ENCODE measurements at regions of chr4 and their contacts with region 1.

Region 1: DNA sequence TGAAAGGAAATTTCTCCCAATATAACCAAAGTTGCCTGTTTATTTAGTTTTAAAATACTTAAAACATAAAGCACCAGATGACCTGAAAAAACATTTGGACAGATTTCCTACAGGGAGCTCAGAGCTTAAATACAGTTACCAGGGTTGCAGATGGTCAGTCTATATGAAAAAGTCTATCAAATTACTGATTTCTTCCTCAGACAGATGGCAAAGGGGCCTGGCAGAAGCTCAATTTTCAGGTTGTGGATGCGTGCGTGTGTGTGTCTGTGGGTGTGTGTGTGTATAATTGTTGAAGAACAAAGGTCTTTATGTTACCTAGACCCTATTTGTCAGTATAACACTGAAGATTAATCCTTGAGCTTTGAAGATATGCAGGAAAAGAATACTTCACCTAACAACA is 169.4 kb downstream of the MAD2L1 start:
- DNase-seq: no peak
- H3K4me3 ChIP-seq: no peak overlapping the region
- H3K27ac ChIP-seq: no peak overlapping the region
- H3K4me1 ChIP-seq: peaks cover 0 to 31% (median 12%) of the 10 kb centered on the region in 4 donors
- H3K27me3 ChIP-seq: no peaks in the 10 kb centered on the region
- CTCF ChIP-seq: no peak
- EP300 ChIP-seq: no peak
- POLR2A ChIP-seq: no peak

Region 2: GRCh38 chr4:119666653-119667091 is 230.6 kb before region 1 on chr4:
- intact Hi-C with region 1: loop called (anchors 5 kb)
- DNase-seq: no peak
- H3K4me3 ChIP-seq: no peak overlapping the region
- H3K27ac ChIP-seq: peak overlapping the region; percentile 49 to 75 (median 70)
- H3K4me1 ChIP-seq: peaks cover 0 to 82% (median 61%) of the 10 kb centered on the region in 4 donors
- H3K27me3 ChIP-seq: no peaks in the 10 kb centered on the region
- CTCF ChIP-seq: no peak
- EP300 ChIP-seq: peak in 1 of 4 donors; percentile 39
- POLR2A ChIP-seq: no peak

Region 3: GRCh38 chr4:119683518-119683917 is 213.7 kb before region 1 on chr4:
- intact Hi-C with region 1: loop called (anchors 5 kb)
- DNase-seq: no peak
- H3K4me3 ChIP-seq: no peak overlapping the region
- H3K27ac ChIP-seq: peak overlapping the region; percentile 47 to 74 (median 70)
- H3K4me1 ChIP-seq: peaks cover 0 to 57% (median 42%) of the 10 kb centered on the region in 4 donors
- H3K27me3 ChIP-seq: no peaks in the 10 kb centered on the region
- CTCF ChIP-seq: no peak
- EP300 ChIP-seq: peak in 1 of 4 donors; percentile 45
- POLR2A ChIP-seq: no peak

Region 4: DNA sequence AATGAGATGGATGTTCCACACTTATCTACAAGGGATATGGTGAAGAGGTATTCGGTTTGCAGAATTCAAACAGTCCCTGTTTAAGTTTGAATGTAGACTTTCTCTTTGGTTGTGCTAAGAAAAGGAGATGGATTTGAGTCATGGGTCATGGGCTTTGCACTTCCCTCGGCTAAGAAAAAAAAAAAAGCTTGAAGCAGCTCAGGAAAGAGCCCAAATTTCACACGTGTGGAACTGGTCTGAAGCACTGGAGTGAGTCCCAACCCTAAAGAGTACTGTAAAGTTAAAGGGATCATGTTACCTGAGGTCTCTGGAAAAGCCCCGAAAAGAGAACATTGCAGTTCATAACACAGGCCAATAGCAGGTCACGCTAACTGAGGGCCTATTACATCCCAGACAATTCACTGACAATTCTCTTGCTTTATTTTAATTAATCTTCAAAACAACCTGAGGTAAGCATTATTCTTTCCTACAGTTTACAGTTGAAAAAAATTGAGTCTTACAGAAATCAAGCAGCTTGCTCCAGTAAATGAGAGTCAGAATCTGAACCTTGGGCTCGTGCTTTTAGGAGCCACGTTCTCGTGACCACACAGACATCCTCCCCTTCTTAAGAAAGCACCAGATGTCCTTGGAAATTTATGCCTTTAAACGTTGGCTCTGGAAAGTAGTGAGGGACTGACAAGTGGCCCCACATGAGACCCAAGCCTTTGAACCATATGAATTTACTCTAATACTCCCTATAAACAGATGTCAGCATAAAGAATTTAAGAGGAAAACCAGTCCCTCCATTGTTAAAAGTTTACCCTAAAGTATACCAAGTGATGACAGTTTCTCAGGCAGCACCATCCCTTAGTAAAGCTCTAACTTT is 80.0 kb after region 1 on chr4:
- intact Hi-C with region 1: loop called (anchors 5 kb)
- DNase-seq: peak; percentile 75
- H3K4me3 ChIP-seq: no peak overlapping the region
- H3K27ac ChIP-seq: peak overlapping the region; percentile 53 to 85 (median 80)
- H3K4me1 ChIP-seq: peaks cover 0 to 66% (median 29%) of the 10 kb centered on the region in 4 donors
- H3K27me3 ChIP-seq: no peaks in the 10 kb centered on the region
- CTCF ChIP-seq: no peak
- EP300 ChIP-seq: peak; percentile 80 to 90 (median 87)
- POLR2A ChIP-seq: no peak